ENCODE measurements at regions of chr9 and their contacts with region 1.

Region 1: DNA sequence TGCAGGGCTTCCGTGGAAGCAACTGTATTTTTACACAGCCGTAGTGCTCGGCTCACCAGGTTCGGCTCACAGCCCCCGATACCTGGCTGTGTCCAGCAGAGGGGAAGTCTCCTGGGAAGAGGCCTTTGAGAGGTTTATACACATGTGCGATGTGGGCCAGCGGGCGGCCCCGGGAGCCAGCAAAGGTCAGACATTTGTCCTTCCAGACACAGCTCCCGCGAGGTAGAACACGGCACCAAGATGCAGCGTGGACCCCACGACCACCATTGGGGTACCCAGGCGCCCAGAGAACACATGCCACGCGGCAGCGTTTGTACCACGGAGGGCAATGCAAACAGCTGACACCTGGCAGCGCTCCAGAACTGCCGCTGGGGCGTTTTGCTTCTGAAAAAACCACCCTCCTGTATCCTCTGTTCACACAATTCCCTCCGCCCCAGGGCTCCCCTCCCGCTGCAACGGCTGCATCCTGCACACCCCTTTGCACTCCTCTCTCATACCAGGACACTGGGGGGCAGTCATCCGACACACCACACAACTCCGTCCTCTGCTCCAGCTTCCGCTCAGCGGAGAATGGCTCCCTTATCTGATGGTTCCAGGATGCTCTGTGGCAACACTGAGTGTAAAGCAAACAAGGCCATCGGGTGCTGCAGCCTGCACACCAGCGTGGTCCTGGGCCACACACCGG is 235.3 kb downstream of the SYK start:
- DNase-seq: peak; percentile 39
- H3K4me3 ChIP-seq: peak overlapping the region in 1 of 4 donors; percentile 18
- H3K27ac ChIP-seq: peak overlapping the region in 3 of 4 donors; percentile 46 to 79 (median 72)
- H3K4me1 ChIP-seq: peaks cover 14 to 40% (median 21%) of the 10 kb centered on the region in 3 donors
- H3K27me3 ChIP-seq: no peaks in the 10 kb centered on the region
- CTCF ChIP-seq: peak; percentile 41 to 69 (median 54)
- POLR2A ChIP-seq: no peak

Region 2: GRCh38 chr9:90870621-90871326 is 166.2 kb before region 1 on chr9:
- intact Hi-C with region 1: no loop called
- DNase-seq: no peak
- H3K4me3 ChIP-seq: no peak overlapping the region
- H3K27ac ChIP-seq: no peak overlapping the region
- H3K4me1 ChIP-seq: peaks cover 0 to 17% (median 9%) of the 10 kb centered on the region in 3 donors
- H3K27me3 ChIP-seq: no peaks in the 10 kb centered on the region
- CTCF ChIP-seq: peak; percentile 60 to 85 (median 78)
- POLR2A ChIP-seq: no peak

Region 3: GRCh38 chr9:90943341-90943740 is 93.6 kb before region 1 on chr9:
- intact Hi-C with region 1: no loop called
- DNase-seq: no peak
- H3K4me3 ChIP-seq: no peak overlapping the region
- H3K27ac ChIP-seq: peak overlapping the region; percentile 38 to 77 (median 68)
- H3K4me1 ChIP-seq: peaks cover 4 to 57% (median 5%) of the 10 kb centered on the region in 3 donors
- H3K27me3 ChIP-seq: peaks cover 0 to 5% (median 0%) of the 10 kb centered on the region in 4 donors
- CTCF ChIP-seq: no peak
- POLR2A ChIP-seq: no peak

Region 4: DNA sequence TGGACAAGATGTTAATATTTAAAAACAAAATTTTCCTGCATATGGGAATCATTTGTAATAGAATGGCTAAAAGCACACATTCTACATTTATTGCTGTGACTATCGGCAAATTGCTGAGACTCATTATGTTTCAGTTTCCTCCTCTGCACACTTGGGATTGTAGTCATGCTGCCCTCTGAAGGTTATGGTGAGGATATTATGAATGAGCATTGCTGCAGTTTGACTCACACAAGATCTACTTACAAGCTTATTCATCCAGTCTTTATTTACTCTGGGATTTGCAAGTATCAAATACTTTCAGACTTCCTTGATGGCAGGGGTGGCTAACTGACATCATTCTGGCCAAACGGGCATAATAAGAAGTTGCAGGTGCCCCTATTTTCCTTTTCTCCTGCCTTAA is 396.2 kb after region 1 on chr9:
- intact Hi-C with region 1: loop called (anchors 10 kb)
- DNase-seq: no peak
- H3K4me3 ChIP-seq: no peak overlapping the region
- H3K27ac ChIP-seq: no peak overlapping the region
- H3K4me1 ChIP-seq: peaks cover 0 to 23% (median 7%) of the 10 kb centered on the region in 3 donors
- H3K27me3 ChIP-seq: peaks cover 0 to 25% (median 0%) of the 10 kb centered on the region in 4 donors
- CTCF ChIP-seq: peak; percentile 23 to 63 (median 48)
- POLR2A ChIP-seq: no peak